Calu3 (cell line): ENCODE measurements at regions of chr1 and their contacts with region 1.

Region 1: GRCh38 chr1:209805875-209806760 is at the start of gene IRF6:
- DNase-seq: peak; percentile 98
- H3K4me3 Mint-ChIP-seq: peak within 1 kb of the TSS; percentile 95
- H3K27ac Mint-ChIP-seq: peak within 1 kb of the TSS; percentile 90
- H3K4me1 Mint-ChIP-seq: peaks cover 55% of the 10 kb centered on the region
- H3K27me3 Mint-ChIP-seq: no peaks in the 10 kb centered on the region
- CTCF ChIP-seq: no peak
- total RNA-seq, gene IRF6: 44.1 and 51.2 TPM in 2 replicates

Region 2: DNA sequence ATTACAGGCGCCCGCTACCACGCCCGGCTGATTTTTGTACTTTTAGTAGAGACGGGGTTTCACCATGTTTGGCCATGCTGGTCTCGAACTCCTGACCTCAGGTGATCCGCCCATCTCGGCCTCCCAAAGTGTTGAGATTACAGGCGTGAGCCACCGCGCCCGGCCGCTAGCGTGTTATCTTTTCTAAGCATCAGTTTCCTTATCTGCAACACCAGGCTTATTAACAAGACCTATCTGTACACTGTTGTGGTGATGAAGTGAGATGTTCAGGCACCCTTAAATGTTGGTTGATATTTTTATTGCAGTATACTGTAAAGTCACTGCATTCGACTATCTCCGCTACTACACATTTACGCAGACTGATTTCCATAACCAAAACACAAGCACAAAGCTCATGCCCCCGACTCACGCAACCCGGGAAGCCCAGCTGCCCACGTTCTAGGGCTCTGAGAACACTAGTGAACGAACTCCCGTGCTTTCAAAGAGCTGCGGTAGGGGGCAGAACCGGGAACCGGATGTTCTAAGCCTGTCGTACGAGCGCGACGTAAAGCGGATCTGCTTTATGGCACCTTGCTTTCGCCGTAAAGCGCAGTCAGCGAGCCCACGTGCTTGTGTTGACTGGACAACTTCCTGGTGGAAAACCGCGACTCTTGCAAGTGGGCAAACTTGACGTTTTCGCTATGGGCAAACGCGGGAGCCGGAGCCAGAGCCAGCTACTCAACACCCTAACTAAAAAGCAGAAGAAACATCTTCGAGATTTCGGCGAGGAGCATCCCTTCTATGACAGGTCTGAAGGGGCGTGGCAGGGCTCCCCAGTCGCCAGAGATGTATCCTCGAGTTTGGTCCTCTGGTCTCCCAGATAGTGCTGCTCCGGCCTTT is 21.5 kb after region 1 on chr1 and contains the start of gene UTP25:
- CTCF ChIA-PET with region 1: interaction called, 13 read pairs
- intact Hi-C with region 1: loop called (anchors 2 kb)
- DNase-seq: peak; percentile 94
- H3K4me3 Mint-ChIP-seq: peak within 1 kb of the TSS; percentile 82
- H3K27ac Mint-ChIP-seq: peak within 1 kb of the TSS; percentile 92
- H3K4me1 Mint-ChIP-seq: peaks cover 67% of the 10 kb centered on the region
- H3K27me3 Mint-ChIP-seq: no peaks in the 10 kb centered on the region
- CTCF ChIP-seq: peak; percentile 59
- total RNA-seq, gene UTP25: 18.6 and 19.1 TPM in 2 replicates